ENCODE measurements at regions of chr6 and their contacts with region 1.

Region 1: GRCh38 chr6:6305575-6305974 is 14.9 kb downstream of the F13A1 start:
- H3K4me3 ChIP-seq: no peak overlapping the region
- H3K27ac ChIP-seq: no peak overlapping the region
- H3K4me1 ChIP-seq: no peaks in the 10 kb centered on the region
- CTCF ChIP-seq: no peak

Region 2: GRCh38 chr6:6315660-6316059 is 10.1 kb after region 1 on chr6:
- CTCF ChIA-PET with region 1: interaction called, 10 read pairs
- POLR2A ChIA-PET with region 1: no interaction called
- H3K4me3 ChIP-seq: no peak overlapping the region
- H3K27ac ChIP-seq: no peak overlapping the region
- H3K4me1 ChIP-seq: no peaks in the 10 kb centered on the region
- CTCF ChIP-seq: no peak

Region 3: GRCh38 chr6:6851059-6851948 is 545.7 kb after region 1 on chr6:
- CTCF ChIA-PET with region 1: no interaction called
- POLR2A ChIA-PET with region 1: no interaction called
- H3K4me3 ChIP-seq: no peak overlapping the region
- H3K27ac ChIP-seq: no peak overlapping the region
- H3K4me1 ChIP-seq: no peaks in the 10 kb centered on the region
- CTCF ChIP-seq: no peak

Measured in HEK293 (cell line).